Activated naive CD4-positive, alpha-beta T cell treated with anti-CD3 and anti-CD28 coated beads for 36 hours (primary cell): ENCODE measurements at regions of chr3 and their contacts with region 1.

Region 1: GRCh38 chr3:112642912-112643506 is 2.1 kb upstream of the CCDC80 start:
- DNase-seq: peak; percentile 92
- H3K4me3 Mint-ChIP-seq: peak overlapping the region; percentile 55
- H3K27ac Mint-ChIP-seq: no peak overlapping the region
- H3K4me1 Mint-ChIP-seq: peaks cover 14% of the 10 kb centered on the region
- H3K27me3 Mint-ChIP-seq: peaks cover 10% of the 10 kb centered on the region

Region 2: GRCh38 chr3:112582244-112582874 is 60.6 kb before region 1 on chr3:
- CTCF ChIA-PET with region 1: interaction called, 17 read pairs
- intact Hi-C with region 1: loop called (anchors 1 kb)
- DNase-seq: peak; percentile 70
- H3K4me3 Mint-ChIP-seq: no peak overlapping the region
- H3K27ac Mint-ChIP-seq: no peak overlapping the region
- H3K4me1 Mint-ChIP-seq: peaks cover 6% of the 10 kb centered on the region
- H3K27me3 Mint-ChIP-seq: no peaks in the 10 kb centered on the region

Region 3: GRCh38 chr3:112699436-112699978 is 56.5 kb after region 1 on chr3:
- CTCF ChIA-PET with region 1: interaction called, 7 read pairs
- intact Hi-C with region 1: loop called (anchors 1 kb)
- DNase-seq: peak; percentile 9
- H3K4me3 Mint-ChIP-seq: no peak overlapping the region
- H3K27ac Mint-ChIP-seq: no peak overlapping the region
- H3K4me1 Mint-ChIP-seq: no peaks in the 10 kb centered on the region
- H3K27me3 Mint-ChIP-seq: peaks cover 10% of the 10 kb centered on the region

Region 4: DNA sequence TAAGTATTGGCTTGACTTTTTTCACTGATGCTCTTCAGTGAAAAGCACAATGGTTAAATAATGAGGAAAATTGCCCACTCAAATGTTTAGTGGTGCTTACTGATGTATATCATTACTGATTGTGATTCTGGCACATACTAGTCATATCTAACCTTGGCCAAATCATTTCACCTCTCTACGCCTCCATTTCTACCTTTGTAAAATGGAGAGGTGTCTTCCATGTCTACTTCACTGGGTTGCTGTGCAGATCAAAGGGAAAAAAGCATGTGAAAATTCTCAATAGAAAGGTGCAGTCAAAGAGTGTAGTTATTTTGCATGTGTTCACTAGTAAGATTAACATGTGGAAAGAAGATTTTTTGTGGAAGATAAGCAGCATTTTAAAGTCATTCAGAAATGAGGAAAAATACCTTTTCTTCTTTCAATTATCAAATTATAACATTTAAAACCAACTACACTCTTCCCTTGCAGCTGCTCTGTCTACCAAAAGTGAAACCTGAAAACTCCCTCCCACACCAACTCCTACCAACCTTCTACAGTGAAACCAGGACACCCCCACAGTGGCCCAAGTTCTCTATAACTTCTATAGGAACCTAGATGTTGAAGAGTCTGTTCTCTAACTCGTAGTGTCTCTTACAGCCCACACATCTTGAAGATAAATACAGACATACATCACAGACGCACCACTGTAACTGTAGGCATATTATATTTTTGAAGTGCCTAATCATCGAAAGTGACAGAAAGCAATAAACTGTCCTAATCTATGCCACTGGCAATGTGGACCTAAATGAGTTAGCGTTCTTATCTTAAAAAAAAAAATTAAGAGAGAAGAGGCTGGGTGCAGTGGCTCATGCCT is 330.5 kb after region 1 on chr3:
- CTCF ChIA-PET with region 1: interaction called, 41 read pairs
- intact Hi-C with region 1: loop called (anchors 1 kb)
- DNase-seq: peak; percentile 66
- H3K4me3 Mint-ChIP-seq: peak overlapping the region; percentile 70
- H3K27ac Mint-ChIP-seq: peak overlapping the region; percentile 52
- H3K4me1 Mint-ChIP-seq: peaks cover 82% of the 10 kb centered on the region
- H3K27me3 Mint-ChIP-seq: no peaks in the 10 kb centered on the region

Region 5: GRCh38 chr3:113035387-113035982 is 392.5 kb after region 1 on chr3:
- CTCF ChIA-PET with region 1: interaction called, 4 read pairs
- intact Hi-C with region 1: loop called (anchors 5 kb)
- DNase-seq: peak; percentile 48
- H3K4me3 Mint-ChIP-seq: no peak overlapping the region
- H3K27ac Mint-ChIP-seq: no peak overlapping the region
- H3K4me1 Mint-ChIP-seq: no peaks in the 10 kb centered on the region
- H3K27me3 Mint-ChIP-seq: no peaks in the 10 kb centered on the region

Region 6: GRCh38 chr3:113287803-113288648 is 645.0 kb after region 1 on chr3:
- CTCF ChIA-PET with region 1: interaction called, 7 read pairs
- intact Hi-C with region 1: loop called (anchors 1 kb)
- DNase-seq: peak; percentile 67
- H3K4me3 Mint-ChIP-seq: no peak overlapping the region
- H3K27ac Mint-ChIP-seq: no peak overlapping the region
- H3K4me1 Mint-ChIP-seq: peaks cover 6% of the 10 kb centered on the region
- H3K27me3 Mint-ChIP-seq: no peaks in the 10 kb centered on the region